H1 (cell line): ENCODE measurements at regions of chr11 and their contacts with region 1.

Region 1: DNA sequence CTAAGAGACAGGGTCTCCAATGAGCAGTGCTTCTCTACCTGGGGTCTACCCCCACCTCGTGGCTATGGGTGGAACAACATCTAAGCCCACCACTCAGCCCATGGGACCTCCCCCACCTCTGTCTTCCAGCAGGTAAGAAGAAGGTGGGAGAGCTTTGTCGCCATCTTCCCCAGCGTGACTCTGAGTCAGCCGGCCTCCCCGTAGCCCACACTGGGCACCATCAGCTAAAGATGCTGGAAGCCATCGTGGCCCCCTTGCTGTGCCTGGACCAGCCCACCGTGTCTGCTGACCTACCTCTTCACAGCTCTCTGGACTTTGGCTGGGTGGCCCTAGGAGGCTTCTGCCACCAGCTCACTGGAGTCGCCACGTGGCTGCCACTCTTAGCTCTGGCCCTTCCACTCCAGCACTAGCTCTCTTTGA is 954 bp downstream of the C11orf86 start:
- DNase-seq: peak; percentile 67 to 95
- H3K4me3 ChIP-seq: no peak overlapping the region
- H3K27ac ChIP-seq: no peak overlapping the region
- H3K4me1 ChIP-seq: peaks cover 0 to 3% (median 0%) of the 10 kb centered on the region in 4 experiments; a peak in 1 of 7 replicates
- H3K27me3 ChIP-seq: no peaks in the 10 kb centered on the region
- CTCF ChIP-seq: peak; percentile 78 to 92 (median 85)
- EP300 ChIP-seq: no peak
- POLR2A ChIP-seq: no peak
- RAD21 ChIP-seq: peak; percentile 88 to 93

Region 2: DNA sequence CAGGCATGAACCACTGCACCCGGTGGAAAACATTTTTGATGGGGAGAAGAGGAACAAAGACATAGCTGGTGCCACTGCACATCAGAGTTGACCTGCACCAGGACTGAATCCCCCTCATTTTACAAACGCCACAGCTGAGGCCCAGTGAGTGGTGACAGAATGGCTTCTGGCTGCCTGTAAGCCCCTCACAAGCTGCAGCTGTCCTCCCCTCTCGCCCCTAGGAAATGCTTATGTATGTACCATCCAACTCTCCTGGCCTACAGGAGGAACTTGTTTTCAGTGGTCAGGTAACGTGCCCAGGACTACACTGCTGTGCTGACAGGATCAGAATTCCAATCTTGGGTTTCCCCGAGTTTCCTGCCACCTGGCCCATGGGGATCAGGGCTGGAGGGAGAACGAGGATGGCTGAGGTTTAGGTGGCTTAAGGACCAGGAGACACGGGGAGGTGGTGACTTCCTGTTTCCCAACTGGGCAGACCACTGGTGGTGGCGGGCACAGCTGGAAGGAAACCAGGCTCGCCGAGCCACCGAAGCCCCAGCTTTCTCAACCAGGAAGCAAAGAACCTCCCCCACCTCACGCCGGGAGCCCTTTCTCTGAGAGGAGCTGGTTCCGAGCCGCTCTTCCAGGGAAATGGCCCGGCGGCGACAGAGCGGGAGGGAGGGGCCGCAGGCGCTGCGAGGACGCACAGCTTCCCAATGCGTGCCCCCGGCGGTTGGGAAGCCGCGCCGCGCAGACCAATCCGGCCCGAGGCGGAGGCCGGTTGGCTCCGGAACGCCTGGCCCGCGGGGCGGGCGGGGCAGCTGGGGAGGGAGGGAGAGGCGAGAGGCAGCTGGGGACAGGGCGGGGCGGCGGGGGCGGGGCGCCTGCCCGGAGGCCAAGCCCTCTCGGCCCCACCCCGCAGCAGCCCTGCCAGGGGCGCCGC is 120.2 kb before region 1 on chr11:
- CTCF ChIA-PET with region 1: interaction called, 24 read pairs
- POLR2A ChIA-PET with region 1: interaction called, 5 read pairs
- DNase-seq: peak; percentile 78 to 94
- H3K4me3 ChIP-seq: peak overlapping the region; percentile 71 to 92 (median 86)
- H3K27ac ChIP-seq: peak overlapping the region; percentile 78
- H3K4me1 ChIP-seq: peaks cover 5 to 20% (median 9%) of the 10 kb centered on the region in 4 experiments
- H3K27me3 ChIP-seq: no peaks in the 10 kb centered on the region
- CTCF ChIP-seq: no peak
- EP300 ChIP-seq: no peak
- POLR2A ChIP-seq: peak in 1 of 2 experiments; percentile 70; a peak in 2 of 3 replicates
- RAD21 ChIP-seq: no peak; a peak in 1 of 4 replicates

Region 3: GRCh38 chr11:66891851-66892660 is 84.0 kb before region 1 on chr11:
- CTCF ChIA-PET with region 1: interaction called, 10 read pairs
- POLR2A ChIA-PET with region 1: no interaction called
- DNase-seq: no peak
- H3K4me3 ChIP-seq: no peak overlapping the region
- H3K27ac ChIP-seq: no peak overlapping the region
- H3K4me1 ChIP-seq: peaks cover 0 to 9% (median 4%) of the 10 kb centered on the region in 4 experiments; a peak in 5 of 7 replicates
- H3K27me3 ChIP-seq: no peaks in the 10 kb centered on the region
- CTCF ChIP-seq: no peak
- EP300 ChIP-seq: no peak
- POLR2A ChIP-seq: no peak
- RAD21 ChIP-seq: no peak

Region 4: DNA sequence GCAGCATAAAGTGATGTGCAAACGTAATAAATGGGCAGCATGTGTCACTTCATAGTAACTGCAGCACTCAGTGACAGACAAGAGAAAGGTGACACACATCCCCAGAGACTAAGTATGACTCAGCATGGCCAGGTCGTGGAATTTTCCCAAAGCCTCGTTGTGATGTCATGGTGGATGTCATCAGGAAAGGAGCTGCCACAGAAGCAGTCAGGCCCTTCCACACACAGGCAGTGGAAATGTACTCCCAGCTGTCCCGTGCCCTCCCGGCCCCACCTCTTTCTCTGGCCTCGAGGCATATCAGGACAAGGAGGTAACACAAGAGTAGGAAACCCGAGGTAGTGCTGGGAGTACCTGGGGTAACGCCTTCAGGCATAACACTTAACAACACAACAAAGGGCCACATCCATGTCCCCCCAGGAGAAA is 25.9 kb before region 1 on chr11:
- CTCF ChIA-PET with region 1: interaction called, 10 read pairs
- POLR2A ChIA-PET with region 1: no interaction called
- DNase-seq: no peak
- H3K4me3 ChIP-seq: no peak overlapping the region
- H3K27ac ChIP-seq: no peak overlapping the region; the same call in 1 of the 2 replicates
- H3K4me1 ChIP-seq: peaks cover 0 to 5% (median 2%) of the 10 kb centered on the region in 4 experiments; a peak in 4 of 7 replicates
- H3K27me3 ChIP-seq: no peaks in the 10 kb centered on the region
- CTCF ChIP-seq: no peak
- EP300 ChIP-seq: no peak
- POLR2A ChIP-seq: no peak
- RAD21 ChIP-seq: no peak

Region 5: DNA sequence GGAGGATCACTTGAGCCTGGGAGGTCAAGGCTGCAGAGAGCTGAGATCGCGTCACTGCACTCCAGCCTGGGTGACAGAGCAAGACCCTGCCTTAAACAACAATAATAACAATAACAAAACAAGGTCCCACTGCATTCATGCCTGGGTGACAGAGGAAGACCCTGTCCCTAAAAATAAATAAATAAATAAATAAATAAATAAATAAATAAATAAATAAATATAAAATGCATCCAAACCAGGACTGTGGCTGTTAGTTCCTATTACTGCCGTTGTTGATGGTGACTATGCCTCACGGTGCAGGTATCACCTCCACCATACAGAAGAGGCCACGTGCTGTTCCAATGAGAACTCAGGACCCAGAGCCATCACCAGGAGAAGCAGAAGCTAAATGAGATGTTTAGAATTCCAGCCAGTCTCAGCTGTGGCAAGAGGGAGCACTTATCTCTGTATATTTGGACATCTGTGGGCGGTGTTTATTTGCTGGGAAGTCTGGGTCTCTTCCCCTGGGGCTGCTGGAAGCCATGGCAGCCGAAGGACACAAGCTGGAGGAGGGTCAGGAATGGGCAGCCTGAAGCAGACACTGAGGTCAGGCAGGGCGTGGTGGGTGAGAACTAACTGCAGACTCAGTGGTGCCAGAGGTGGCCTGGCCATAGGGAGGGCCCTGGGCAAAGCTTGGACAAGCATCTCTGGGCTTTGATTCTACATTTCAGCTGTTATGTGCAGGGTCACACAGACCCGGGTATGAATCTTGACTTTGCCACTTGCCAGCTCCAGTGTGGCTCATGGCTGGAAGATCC is 20.7 kb after region 1 on chr11:
- CTCF ChIA-PET with region 1: interaction called, 12 read pairs
- POLR2A ChIA-PET with region 1: interaction called, 3 read pairs
- DNase-seq: no peak
- H3K4me3 ChIP-seq: no peak overlapping the region
- H3K27ac ChIP-seq: no peak overlapping the region
- H3K4me1 ChIP-seq: peaks cover 0 to under 1% (median under 1%) of the 10 kb centered on the region in 4 experiments; a peak in 5 of 7 replicates
- H3K27me3 ChIP-seq: no peaks in the 10 kb centered on the region
- CTCF ChIP-seq: no peak
- EP300 ChIP-seq: no peak
- POLR2A ChIP-seq: no peak
- RAD21 ChIP-seq: no peak

Region 6: GRCh38 chr11:67160874-67161783 is 185.1 kb after region 1 on chr11:
- CTCF ChIA-PET with region 1: no interaction called
- POLR2A ChIA-PET with region 1: no interaction called
- DNase-seq: no peak
- H3K4me3 ChIP-seq: no peak overlapping the region
- H3K27ac ChIP-seq: no peak overlapping the region
- H3K4me1 ChIP-seq: no peaks in the 10 kb centered on the region
- H3K27me3 ChIP-seq: no peaks in the 10 kb centered on the region
- CTCF ChIP-seq: peak in 1 of 3 experiments; percentile 17; a peak in 1 of 4 replicates
- EP300 ChIP-seq: no peak
- POLR2A ChIP-seq: no peak
- RAD21 ChIP-seq: no peak; a peak in 1 of 4 replicates